ENCODE measurements at regions of chr14 and their contacts with region 1.

Region 1: DNA sequence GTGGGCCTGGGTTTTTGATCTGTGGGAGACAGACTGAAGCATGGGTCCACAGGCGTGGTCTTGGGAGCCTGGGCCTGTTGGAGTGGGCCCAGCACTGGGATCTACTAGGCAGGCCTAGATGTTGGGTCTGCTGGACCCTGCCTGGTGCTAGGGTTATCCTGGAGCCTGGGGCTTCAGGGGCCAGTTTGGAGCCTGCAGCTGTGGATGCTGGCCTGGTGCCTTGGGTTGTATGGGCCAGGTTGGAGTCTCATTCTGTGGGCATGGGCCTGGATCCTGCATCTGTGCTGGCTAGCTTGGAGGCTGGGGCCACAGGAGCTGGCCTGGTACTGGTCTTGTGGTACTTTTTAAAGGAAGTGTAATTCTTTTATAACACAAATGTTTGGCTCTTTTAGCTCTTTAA is 68.0 kb downstream of the GPHN start:
- DNase-seq: no peak
- H3K4me3 ChIP-seq: no peak overlapping the region
- H3K27ac ChIP-seq: no peak overlapping the region
- H3K4me1 ChIP-seq: no peaks in the 10 kb centered on the region
- H3K27me3 ChIP-seq: no peaks in the 10 kb centered on the region
- CTCF ChIP-seq: no peak

Region 2: GRCh38 chr14:67285876-67286452 is 710.0 kb after region 1 on chr14:
- CTCF ChIA-PET with region 1: no interaction called
- POLR2A ChIA-PET with region 1: interaction called, 21 read pairs
- intact Hi-C with region 1: no loop called
- DNase-seq: peak in 1 of 2 experiments; percentile 56
- H3K4me3 ChIP-seq: no peak overlapping the region
- H3K27ac ChIP-seq: no peak overlapping the region
- H3K4me1 ChIP-seq: no peaks in the 10 kb centered on the region
- H3K27me3 ChIP-seq: no peaks in the 10 kb centered on the region
- CTCF ChIP-seq: peak; percentile 89